AG04449 (cell line): ENCODE measurements at regions of chr15 and their contacts with region 1.

Region 1: DNA sequence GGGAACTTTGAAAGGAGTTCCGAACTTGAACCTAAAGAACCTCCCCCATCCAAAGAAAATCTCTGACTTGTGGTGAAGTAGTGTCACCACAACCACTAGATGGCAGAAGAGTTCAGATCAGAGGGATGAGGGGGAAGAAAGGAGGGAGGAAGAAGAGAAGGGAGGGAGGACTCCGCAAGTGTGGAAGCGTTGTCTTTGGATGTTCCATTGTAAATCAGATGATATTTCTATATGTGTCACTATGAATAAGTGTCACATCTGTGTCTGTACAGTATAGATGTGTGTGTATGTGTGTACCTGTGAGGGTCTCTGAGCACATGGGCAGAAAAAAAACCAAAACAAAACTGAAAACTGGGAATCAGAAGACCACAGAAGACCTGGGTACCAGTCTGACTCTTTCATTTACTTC is 16.9 kb downstream of the SLC24A1 start:
- DNase-seq: peak; percentile 34
- H3K4me3 ChIP-seq: no peak overlapping the region
- CTCF ChIP-seq: peak; percentile 80

Region 2: DNA sequence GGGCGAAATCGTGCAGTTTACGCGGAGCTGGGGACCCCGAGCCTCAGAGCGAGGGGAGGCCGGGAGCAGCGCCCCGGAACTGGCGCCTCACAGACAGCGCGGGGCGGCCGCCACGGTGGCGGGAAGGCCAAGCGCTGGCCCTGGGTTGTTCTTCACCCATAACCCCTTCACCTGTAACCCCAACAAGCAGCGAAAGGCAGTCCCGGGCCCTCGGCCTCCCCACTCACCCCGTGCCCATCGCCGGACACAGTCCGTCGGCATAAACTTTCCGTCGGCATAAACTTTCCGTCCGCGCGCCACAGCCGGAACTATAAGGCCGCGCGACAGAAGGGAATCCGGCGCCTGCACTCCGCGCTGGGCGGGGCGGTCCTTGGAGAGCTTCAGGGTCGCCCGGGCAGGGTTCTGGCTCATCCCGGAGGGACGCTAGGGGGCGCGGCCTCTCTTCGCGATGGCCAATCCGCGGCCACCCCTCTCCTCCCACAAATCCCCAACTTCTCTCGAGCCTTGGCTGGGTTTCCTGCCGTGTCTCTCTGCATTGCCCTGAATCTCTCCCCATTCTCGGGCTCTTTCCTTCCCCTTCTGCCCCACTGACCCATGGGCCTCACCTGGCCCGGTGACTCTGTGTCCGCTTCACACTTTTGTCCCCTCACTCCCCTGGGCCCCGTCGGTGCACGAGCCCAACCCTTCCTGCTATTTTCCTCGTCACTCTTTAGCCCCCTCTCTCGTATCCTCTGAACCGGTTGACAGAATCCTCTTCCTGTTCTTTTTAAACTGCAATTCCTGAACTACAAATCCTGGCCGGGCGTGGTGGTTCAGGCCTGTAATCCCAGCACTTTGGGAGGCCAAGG is 27.6 kb before region 1 on chr15 and contains the start of gene INTS14:
- CTCF ChIA-PET with region 1: interaction called, 27 read pairs
- POLR2A ChIA-PET with region 1: no interaction called
- DNase-seq: peak; percentile 73
- H3K4me3 ChIP-seq: peak within 1 kb of the TSS; percentile 77
- CTCF ChIP-seq: peak; percentile 81

Region 3: DNA sequence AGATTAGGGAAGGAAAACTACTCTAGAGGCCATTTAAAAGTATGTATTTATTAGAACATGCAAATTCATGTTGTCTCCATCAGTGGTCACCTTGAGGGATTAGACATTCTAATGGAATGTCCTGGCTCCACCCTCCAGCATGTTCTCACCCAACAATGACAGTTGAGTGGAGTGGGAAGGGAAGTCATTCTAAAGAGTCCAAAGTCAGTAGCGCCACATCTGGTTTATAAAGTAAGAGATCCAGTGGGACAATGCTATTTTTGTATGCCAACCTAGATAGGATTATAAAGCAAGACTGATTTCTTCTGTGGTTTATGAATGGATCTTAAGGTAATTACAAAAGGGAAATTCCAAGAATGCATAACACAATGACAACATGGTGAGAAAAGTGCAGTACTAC is 16.3 kb after region 1 on chr15:
- CTCF ChIA-PET with region 1: interaction called, 49 read pairs
- POLR2A ChIA-PET with region 1: no interaction called
- DNase-seq: no peak
- H3K4me3 ChIP-seq: no peak overlapping the region
- CTCF ChIP-seq: no peak

Region 4: DNA sequence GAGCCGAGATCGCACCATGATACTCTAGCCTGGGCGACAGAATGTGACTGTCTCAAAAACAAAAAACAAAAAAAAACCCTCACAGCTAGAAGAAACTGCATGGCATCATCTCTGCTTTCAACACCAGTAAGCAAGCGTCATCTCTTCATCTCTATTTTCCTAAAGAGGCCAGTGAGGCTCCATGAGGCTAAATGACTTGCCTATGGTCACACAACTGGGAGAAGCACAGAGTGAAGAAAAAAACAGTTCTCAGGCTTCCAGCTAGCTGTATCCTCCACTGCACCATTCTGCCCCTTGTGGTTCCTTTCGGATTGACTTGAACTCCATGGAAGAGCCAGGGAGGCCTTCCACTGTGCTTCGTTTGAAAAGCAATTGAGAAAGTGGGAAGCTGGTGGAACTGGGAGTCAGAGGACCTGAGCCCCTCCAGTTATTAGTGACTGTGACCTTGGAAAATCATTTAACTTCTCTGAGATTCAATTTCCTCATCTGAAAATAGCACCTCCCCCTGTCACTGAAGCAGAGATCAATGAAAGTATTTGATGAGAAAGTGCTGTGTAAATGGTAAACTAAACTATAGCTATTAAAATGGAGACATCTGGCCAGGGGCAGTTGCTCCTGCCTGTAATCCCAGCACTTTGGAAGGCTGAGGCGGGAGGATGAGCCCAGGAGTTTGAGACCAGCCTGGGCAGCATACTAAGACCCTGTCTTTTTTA is 185.5 kb after region 1 on chr15:
- CTCF ChIA-PET with region 1: interaction called, 22 read pairs
- POLR2A ChIA-PET with region 1: no interaction called
- DNase-seq: no peak
- H3K4me3 ChIP-seq: no peak overlapping the region
- CTCF ChIP-seq: peak; percentile 75

Region 5: DNA sequence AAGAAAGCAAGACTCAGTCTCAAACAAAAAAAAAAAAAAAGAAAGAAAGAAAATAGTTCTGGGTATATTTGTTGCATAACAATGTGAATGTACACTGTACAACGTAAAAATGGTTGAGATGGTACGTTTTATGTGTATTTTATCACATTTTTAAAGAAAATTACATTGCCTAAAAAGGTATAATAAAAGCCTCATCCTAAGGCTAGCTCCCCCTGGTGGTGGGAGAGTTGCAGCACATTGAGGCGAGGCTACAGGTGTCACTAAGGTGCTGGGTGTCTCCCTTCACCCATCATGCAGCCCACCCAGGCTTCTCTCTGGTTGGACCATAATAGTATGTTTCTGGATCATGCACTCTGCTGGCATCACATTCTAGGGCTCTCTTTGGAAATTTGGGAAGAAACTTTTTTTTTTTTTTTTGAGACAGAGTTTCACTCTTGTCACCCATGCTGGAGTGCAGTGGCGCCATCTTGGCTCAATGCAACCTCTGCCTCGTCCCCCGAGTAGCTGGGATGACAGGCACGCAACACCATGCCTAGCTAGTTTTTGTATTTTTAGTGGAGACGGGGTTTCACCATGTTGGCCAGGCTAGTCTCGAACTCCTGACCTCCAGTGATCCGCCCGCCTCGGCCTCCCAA is 218.3 kb after region 1 on chr15:
- CTCF ChIA-PET with region 1: interaction called, 136 read pairs
- POLR2A ChIA-PET with region 1: no interaction called
- DNase-seq: no peak
- H3K4me3 ChIP-seq: no peak overlapping the region
- CTCF ChIP-seq: peak; percentile 80

Region 6: DNA sequence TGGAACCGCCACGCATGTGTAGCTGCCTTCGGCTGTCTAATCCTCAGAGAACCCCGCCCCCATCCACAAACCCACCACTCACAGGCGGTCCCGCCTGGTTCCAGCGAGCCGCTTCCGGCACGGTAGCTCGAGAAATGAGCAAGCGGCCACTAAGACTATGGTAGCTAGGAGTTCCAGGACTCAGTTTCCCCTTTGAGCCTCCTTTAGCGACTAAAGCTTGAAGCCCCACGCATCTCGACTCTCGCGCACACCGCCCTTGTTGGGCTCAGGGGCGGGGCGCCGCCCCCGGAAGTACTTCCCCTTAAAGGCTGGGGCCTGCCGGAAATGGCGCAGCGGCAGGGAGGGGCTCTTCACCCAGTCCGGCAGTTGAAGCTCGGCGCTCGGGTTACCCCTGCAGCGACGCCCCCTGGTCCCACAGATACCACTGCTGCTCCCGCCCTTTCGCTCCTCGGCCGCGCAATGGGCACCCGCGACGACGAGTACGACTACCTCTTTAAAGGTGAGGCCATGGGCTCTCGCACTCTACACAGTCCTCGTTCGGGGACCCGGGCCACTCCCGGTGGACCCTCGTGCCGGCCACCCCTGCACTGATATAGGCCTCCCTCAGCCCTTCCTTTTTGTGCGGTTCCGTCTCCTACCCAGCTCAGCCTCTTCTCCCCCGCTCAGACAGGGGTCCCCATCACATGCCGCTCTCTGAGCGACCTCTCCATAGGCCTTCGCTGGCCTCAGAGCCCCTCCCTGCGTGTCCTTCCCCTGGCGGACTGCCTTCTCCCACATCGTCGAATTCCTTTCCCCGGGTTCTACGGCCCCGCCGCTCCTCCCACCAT is 230.7 kb after region 1 on chr15 and contains the start of gene RAB11A:
- CTCF ChIA-PET with region 1: interaction called, 25 read pairs
- POLR2A ChIA-PET with region 1: no interaction called
- DNase-seq: peak; percentile 78
- H3K4me3 ChIP-seq: peak within 1 kb of the TSS; percentile 97
- CTCF ChIP-seq: peak; percentile 62